ENCODE measurements at regions of chr7 and their contacts with region 1.

Region 1: GRCh38 chr7:151744656-151745638 is 132.0 kb downstream of the PRKAG2 start:
- DNase-seq: peak; percentile 54 to 74
- ATAC-seq: peak; percentile 66 to 95 (median 82)
- H3K4me3 ChIP-seq: no peak overlapping the region
- H3K27ac ChIP-seq: peak overlapping the region; percentile 38 to 88 (median 78)
- H3K4me1 ChIP-seq: peaks cover 11 to 42% (median 33%) of the 10 kb centered on the region in 9 donors
- H3K27me3 ChIP-seq: no peaks in the 10 kb centered on the region
- CTCF ChIP-seq: peak in 8 of 9 donors; percentile 16 to 45 (median 38)

Region 2: DNA sequence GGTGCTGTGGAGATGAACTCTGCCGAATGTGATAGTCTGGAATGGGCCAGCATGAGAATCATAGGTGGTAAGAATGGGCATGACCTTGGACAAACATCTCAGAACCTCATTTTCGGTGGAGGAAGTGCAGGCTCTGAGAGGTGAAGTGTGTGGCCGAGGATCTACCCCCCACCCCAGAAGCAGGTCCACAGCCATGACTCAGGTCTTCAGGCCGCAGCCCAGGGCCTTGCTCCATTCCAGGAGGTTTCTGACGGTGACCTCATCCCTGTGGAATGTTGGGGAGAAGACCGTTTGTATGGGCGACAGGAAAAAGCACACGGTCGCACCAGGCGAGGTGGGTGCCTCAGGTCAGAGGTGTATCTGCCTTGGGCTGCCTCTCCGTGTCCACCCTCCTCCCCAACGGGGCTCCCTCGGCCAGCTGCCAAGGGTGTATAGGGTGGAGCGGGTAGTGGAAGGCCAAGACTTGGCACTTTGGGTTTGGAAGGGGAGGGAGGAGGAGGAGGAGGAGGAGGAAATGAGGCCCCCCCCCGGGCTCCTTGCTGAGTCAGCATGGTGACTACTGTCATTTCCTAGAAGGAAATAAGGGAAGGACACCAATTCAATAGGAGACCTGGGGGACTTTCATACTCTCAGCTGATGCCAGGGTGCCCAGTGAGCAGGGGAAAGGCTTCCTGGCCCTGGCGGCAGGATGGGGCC is 57.3 kb before region 1 on chr7:
- intact Hi-C with region 1: no loop called
- DNase-seq: peak; percentile 43 to 47
- ATAC-seq: peak; percentile 18 to 80 (median 62)
- H3K4me3 ChIP-seq: no peak overlapping the region
- H3K27ac ChIP-seq: peak overlapping the region in 9 of 10 donors; percentile 34 to 82 (median 69)
- H3K4me1 ChIP-seq: peaks cover 3 to 65% (median 42%) of the 10 kb centered on the region in 9 donors
- H3K27me3 ChIP-seq: no peaks in the 10 kb centered on the region
- CTCF ChIP-seq: no peak

Region 3: GRCh38 chr7:151700586-151701165 is 44.3 kb before region 1 on chr7:
- intact Hi-C with region 1: loop called in 1 of 10 experiments (anchors 5 kb)
- DNase-seq: no peak
- ATAC-seq: peak in 1 of 8 donors; percentile 1
- H3K4me3 ChIP-seq: no peak overlapping the region
- H3K27ac ChIP-seq: peak overlapping the region in 6 of 10 donors; percentile 31 to 76 (median 62)
- H3K4me1 ChIP-seq: peaks cover 3 to 67% (median 30%) of the 10 kb centered on the region in 9 donors
- H3K27me3 ChIP-seq: no peaks in the 10 kb centered on the region
- CTCF ChIP-seq: no peak

Measured in heart right ventricle (tissue), 16 donors.